Panc1 (cell line): ENCODE measurements at regions of chr4 and their contacts with region 1.

Region 1: GRCh38 chr4:2458546-2459491 is 10.1 kb upstream of the RNF4 start:
- DNase-seq: no peak
- ATAC-seq: no peak
- H3K4me3 ChIP-seq: no peak overlapping the region
- H3K27ac ChIP-seq: no peak overlapping the region
- H3K4me1 ChIP-seq: 0 out of 2 replicates have a peak, but pooled peaks cover 2% of the 10 kb centered on the region
- H3K27me3 ChIP-seq: no peaks in the 10 kb centered on the region
- CTCF ChIP-seq: no peak

Region 2: DNA sequence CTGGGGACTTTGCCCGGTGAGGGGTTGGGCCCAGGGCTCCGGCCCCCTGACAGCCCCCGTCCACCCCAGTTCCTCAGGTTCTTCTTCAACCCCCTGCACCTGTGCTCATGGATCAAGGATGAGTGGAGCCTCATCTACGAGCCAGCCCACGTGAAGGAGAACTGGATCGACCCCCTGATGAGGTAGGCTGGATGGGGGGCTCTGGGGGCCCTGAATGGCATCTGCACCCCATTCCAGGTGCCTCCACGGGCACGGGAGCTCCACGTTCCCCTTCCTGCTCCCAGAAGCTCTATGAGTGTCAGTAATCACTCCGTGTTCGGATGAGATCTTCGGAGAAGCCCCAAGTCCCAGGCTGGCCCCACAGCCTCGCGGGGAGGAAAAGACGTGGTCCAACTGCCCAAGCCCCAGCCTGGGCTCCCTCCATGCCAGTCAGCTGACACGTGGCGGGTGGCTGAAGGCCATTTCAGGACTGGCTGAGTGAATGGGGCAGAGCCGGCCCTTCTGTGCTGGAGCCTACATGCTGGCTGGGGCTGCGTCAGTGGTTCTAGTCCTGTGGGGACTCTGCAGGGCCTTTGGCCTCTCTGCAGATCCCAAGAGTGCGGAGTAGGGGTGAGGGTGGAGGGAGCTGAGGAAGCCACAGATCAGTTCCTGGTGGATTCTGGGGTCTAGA is 15.6 kb before region 1 on chr4:
- CTCF ChIA-PET with region 1: interaction called, 3 read pairs
- POLR2A ChIA-PET with region 1: interaction called, 11 read pairs
- in situ Hi-C with region 1: no loop called
- intact Hi-C with region 1: no loop called
- DNase-seq: no peak
- ATAC-seq: peak; percentile 57; the same call in 1 of the 2 replicates
- H3K4me3 ChIP-seq: no peak overlapping the region
- H3K27ac ChIP-seq: no peak overlapping the region
- H3K4me1 ChIP-seq: no peaks in the 10 kb centered on the region
- H3K27me3 ChIP-seq: no peaks in the 10 kb centered on the region
- CTCF ChIP-seq: no peak